ENCODE measurements at regions of chr16 and their contacts with region 1.

Region 1: GRCh38 chr16:11742539-11743307 is at the start of gene TXNDC11:
- DNase-seq: peak; percentile 98
- ATAC-seq: peak; percentile 88
- H3K4me3 ChIP-seq: peak within 1 kb of the TSS; percentile 75 to 98 (median 97)
- H3K27ac ChIP-seq: peak within 1 kb of the TSS; percentile 94
- H3K4me1 ChIP-seq: peaks cover 84% of the 10 kb centered on the region
- H3K27me3 ChIP-seq: no peaks in the 10 kb centered on the region; a peak in 1 of 5 replicates
- CTCF ChIP-seq: no peak; the same call in 1 of the 2 replicates
- EP300 ChIP-seq: peak in 1 of 2 experiments; percentile 63
- POLR2A ChIP-seq: peak; percentile 96 to 98
- RAD21 ChIP-seq: peak; percentile 89
- total RNA-seq, gene TXNDC11: 46.4 and 74.9 TPM in 2 replicates

Region 2: DNA sequence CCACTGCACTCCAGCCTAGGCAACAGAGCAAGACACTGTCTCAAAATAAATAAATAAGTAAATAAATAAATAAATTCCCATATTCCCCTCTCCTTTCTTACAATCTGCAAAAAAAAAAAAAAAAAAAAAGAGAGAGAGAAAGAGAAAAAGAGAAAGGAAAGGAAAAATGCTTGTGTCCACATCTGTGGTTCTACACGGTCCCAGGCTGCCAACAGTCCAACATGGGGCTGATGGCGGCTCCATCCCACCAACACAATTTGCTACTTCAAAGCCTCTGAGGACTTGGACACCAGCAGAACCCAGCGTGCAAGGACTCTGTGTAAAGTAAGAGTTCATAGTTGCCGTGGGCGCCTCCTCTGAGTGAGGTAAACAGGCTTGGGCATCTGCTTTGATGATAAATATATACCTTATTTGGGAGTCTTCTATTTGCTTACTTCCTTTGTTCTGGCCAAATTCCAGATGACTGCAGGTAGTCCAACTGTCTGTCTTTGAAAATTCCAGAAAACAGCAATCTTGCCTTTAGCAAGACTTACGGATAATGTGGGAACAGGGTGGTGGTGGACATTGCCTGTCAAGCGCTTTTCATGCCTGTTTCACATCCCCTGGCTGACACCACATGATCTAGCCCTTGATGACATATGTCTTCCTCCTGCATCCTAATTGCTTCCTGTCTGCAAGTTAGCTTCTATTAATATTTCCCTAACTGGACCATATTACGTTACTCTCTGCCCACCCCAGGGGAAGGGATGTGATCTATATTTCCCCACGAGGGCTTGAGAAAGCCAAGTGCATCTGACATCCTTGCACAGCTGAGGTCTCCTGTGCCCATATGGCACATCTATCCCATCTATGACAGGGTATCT is 166.1 kb before region 1 on chr16:
- CTCF ChIA-PET with region 1: no interaction called
- POLR2A ChIA-PET with region 1: interaction called, 10 read pairs
- in situ Hi-C with region 1: no loop called
- intact Hi-C with region 1: loop called (anchors 5 kb)
- DNase-seq: peak; percentile 97
- ATAC-seq: peak; percentile 76
- H3K4me3 ChIP-seq: peak overlapping the region in 1 of 3 experiments; percentile 51; a peak in 2 of 6 replicates
- H3K27ac ChIP-seq: peak overlapping the region; percentile 86
- H3K4me1 ChIP-seq: peaks cover 90% of the 10 kb centered on the region
- H3K27me3 ChIP-seq: no peaks in the 10 kb centered on the region
- CTCF ChIP-seq: 0 out of 2 replicates have a peak, but pooled peaks have one; percentile 1
- EP300 ChIP-seq: peak; percentile 25 to 92; a peak in 2 of 4 replicates
- POLR2A ChIP-seq: peak in 1 of 2 experiments; percentile 21; a peak in 1 of 4 replicates
- RAD21 ChIP-seq: no peak

Region 3: GRCh38 chr16:11604783-11605558 is 137.8 kb before region 1 on chr16:
- CTCF ChIA-PET with region 1: no interaction called
- POLR2A ChIA-PET with region 1: no interaction called
- in situ Hi-C with region 1: no loop called
- intact Hi-C with region 1: no loop called
- DNase-seq: no peak
- ATAC-seq: no peak
- H3K4me3 ChIP-seq: no peak overlapping the region
- H3K27ac ChIP-seq: no peak overlapping the region
- H3K4me1 ChIP-seq: peaks cover 12% of the 10 kb centered on the region; the same call in 1 of the 2 replicates
- H3K27me3 ChIP-seq: peaks cover 15 to 77% of the 10 kb centered on the region in 2 experiments; a peak in 4 of 5 replicates
- CTCF ChIP-seq: no peak
- EP300 ChIP-seq: no peak
- POLR2A ChIP-seq: no peak
- RAD21 ChIP-seq: no peak

Region 4: DNA sequence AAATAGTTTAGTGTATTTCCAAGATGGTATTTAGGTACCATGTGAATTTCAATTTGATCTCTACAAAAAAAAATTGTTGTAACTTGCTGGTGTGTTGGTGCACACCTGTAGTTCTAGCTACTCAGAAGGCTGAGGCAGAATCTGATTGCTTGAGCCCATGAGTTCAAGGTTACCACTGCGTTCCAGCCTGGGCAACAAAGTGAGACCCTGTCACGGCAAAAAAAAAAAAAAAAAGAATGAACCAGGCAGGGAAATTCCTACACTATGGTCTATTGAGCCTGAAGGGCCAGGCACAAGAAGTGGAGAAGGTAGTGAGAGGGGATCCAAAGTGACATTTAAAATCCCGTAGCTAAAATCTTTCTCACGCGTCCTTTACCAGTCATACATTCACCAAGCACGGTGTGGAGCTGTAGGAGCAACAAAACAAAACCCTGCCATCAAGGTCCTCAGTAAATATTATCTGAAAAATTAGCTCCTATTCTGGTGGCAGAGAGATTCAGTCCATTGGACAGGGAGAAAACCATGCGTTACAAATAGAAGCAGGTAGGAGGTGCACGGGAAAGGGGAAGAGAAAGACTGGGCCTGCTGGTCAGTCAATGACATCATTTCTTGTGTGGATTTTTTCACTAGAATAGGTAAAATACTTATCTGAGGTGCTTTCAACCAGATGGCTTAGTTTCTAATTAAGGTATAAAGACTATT is 27.3 kb before region 1 on chr16:
- CTCF ChIA-PET with region 1: no interaction called
- POLR2A ChIA-PET with region 1: interaction called, 13 read pairs
- in situ Hi-C with region 1: no loop called
- intact Hi-C with region 1: no loop called
- DNase-seq: peak; percentile 15
- ATAC-seq: peak; percentile 35
- H3K4me3 ChIP-seq: no peak overlapping the region
- H3K27ac ChIP-seq: peak overlapping the region; percentile 34
- H3K4me1 ChIP-seq: peaks cover 41% of the 10 kb centered on the region
- H3K27me3 ChIP-seq: no peaks in the 10 kb centered on the region
- CTCF ChIP-seq: peak; percentile 20; the same call in 1 of the 2 replicates
- EP300 ChIP-seq: no peak
- POLR2A ChIP-seq: no peak
- RAD21 ChIP-seq: no peak

Region 5: GRCh38 chr16:11768849-11769248 is 26.1 kb after region 1 on chr16:
- CTCF ChIA-PET with region 1: no interaction called
- POLR2A ChIA-PET with region 1: interaction called, 17 read pairs
- in situ Hi-C with region 1: no loop called
- intact Hi-C with region 1: no loop called
- DNase-seq: no peak
- ATAC-seq: no peak
- H3K4me3 ChIP-seq: no peak overlapping the region
- H3K27ac ChIP-seq: no peak overlapping the region
- H3K4me1 ChIP-seq: no peaks in the 10 kb centered on the region
- H3K27me3 ChIP-seq: no peaks in the 10 kb centered on the region
- CTCF ChIP-seq: no peak
- EP300 ChIP-seq: no peak
- POLR2A ChIP-seq: no peak
- RAD21 ChIP-seq: no peak

Region 6: DNA sequence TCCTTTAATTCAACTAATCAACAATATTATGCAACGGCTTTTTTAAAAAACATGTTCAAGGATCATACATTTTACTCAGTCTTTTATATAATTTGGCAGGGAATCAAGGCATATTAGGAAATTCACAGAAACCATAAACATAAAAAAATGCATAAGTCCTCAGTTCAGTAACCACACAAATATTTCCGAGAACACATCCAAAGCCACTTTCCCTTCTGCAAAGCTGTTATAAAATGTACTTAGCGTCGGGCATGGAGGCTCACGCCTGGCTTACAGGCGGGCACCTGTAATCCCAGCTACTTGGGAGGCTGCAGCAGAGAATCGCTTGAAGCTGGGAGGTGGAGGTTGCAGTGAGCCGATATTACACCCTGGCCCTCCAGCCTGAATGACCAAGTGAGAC is 64.0 kb after region 1 on chr16:
- CTCF ChIA-PET with region 1: no interaction called
- POLR2A ChIA-PET with region 1: interaction called, 11 read pairs
- in situ Hi-C with region 1: no loop called
- intact Hi-C with region 1: loop called (anchors 5 kb)
- DNase-seq: no peak
- ATAC-seq: no peak
- H3K4me3 ChIP-seq: no peak overlapping the region
- H3K27ac ChIP-seq: no peak overlapping the region
- H3K4me1 ChIP-seq: peaks cover 28% of the 10 kb centered on the region
- H3K27me3 ChIP-seq: no peaks in the 10 kb centered on the region; a peak in 1 of 5 replicates
- CTCF ChIP-seq: no peak
- EP300 ChIP-seq: no peak
- POLR2A ChIP-seq: no peak
- RAD21 ChIP-seq: no peak

Region 7: GRCh38 chr16:11915644-11916523 is 173.2 kb after region 1 on chr16 and contains the start of gene GSPT1:
- CTCF ChIA-PET with region 1: no interaction called
- POLR2A ChIA-PET with region 1: interaction called, 13 read pairs
- in situ Hi-C with region 1: no loop called
- intact Hi-C with region 1: loop called (anchors 10 kb)
- DNase-seq: peak; percentile 99
- ATAC-seq: peak; percentile 92
- H3K4me3 ChIP-seq: peak within 1 kb of the TSS; percentile 74 to 98 (median 97)
- H3K27ac ChIP-seq: peak within 1 kb of the TSS; percentile 94
- H3K4me1 ChIP-seq: peaks cover 48% of the 10 kb centered on the region
- H3K27me3 ChIP-seq: no peaks in the 10 kb centered on the region; a peak in 1 of 5 replicates
- CTCF ChIP-seq: peak; percentile 52
- EP300 ChIP-seq: peak; percentile 8 to 53; a peak in 1 of 4 replicates
- POLR2A ChIP-seq: peak; percentile 80 to 97
- RAD21 ChIP-seq: peak; percentile 52
- total RNA-seq, gene GSPT1: 316 and 449 TPM in 2 replicates

Measured in HepG2 (cell line).